Esophagus muscularis mucosa (tissue), 4 donors: ENCODE measurements at regions of chr9 and their contacts with region 1.

Region 1: GRCh38 chr9:34328987-34329832 is at the starts of genes KIF24 and NUDT2:
- DNase-seq: peak; percentile 99
- H3K4me3 ChIP-seq: peak within 1 kb of the TSS; percentile 70 to 81 (median 76)
- H3K27ac ChIP-seq: peak within 1 kb of the TSS; percentile 92 to 96 (median 94)
- H3K4me1 ChIP-seq: peaks cover 14 to 44% (median 38%) of the 10 kb centered on the region in 4 donors
- H3K27me3 ChIP-seq: no peaks in the 10 kb centered on the region
- CTCF ChIP-seq: no peak
- EP300 ChIP-seq: no peak
- POLR2A ChIP-seq: peak; percentile 20
- total RNA-seq, gene KIF24: 0.42 to 1.5 (median 0.62) TPM
- total RNA-seq, gene NUDT2: 15.0 to 45.3 (median 23.0) TPM

Region 2: GRCh38 chr9:34139477-34140146 is 189.6 kb before region 1 on chr9:
- intact Hi-C with region 1: no loop called
- DNase-seq: no peak
- H3K4me3 ChIP-seq: no peak overlapping the region
- H3K27ac ChIP-seq: no peak overlapping the region
- H3K4me1 ChIP-seq: peaks cover 0 to 9% (median 3%) of the 10 kb centered on the region in 4 donors
- H3K27me3 ChIP-seq: no peaks in the 10 kb centered on the region
- CTCF ChIP-seq: peak in 2 of 3 experiments; percentile 20 to 37
- EP300 ChIP-seq: no peak
- POLR2A ChIP-seq: no peak

Region 3: GRCh38 chr9:34271265-34272006 is 57.8 kb before region 1 on chr9:
- intact Hi-C with region 1: no loop called
- DNase-seq: no peak
- H3K4me3 ChIP-seq: no peak overlapping the region
- H3K27ac ChIP-seq: no peak overlapping the region
- H3K4me1 ChIP-seq: peaks cover 0 to 18% (median 13%) of the 10 kb centered on the region in 4 donors
- H3K27me3 ChIP-seq: no peaks in the 10 kb centered on the region
- CTCF ChIP-seq: no peak
- EP300 ChIP-seq: no peak
- POLR2A ChIP-seq: no peak

Region 4: DNA sequence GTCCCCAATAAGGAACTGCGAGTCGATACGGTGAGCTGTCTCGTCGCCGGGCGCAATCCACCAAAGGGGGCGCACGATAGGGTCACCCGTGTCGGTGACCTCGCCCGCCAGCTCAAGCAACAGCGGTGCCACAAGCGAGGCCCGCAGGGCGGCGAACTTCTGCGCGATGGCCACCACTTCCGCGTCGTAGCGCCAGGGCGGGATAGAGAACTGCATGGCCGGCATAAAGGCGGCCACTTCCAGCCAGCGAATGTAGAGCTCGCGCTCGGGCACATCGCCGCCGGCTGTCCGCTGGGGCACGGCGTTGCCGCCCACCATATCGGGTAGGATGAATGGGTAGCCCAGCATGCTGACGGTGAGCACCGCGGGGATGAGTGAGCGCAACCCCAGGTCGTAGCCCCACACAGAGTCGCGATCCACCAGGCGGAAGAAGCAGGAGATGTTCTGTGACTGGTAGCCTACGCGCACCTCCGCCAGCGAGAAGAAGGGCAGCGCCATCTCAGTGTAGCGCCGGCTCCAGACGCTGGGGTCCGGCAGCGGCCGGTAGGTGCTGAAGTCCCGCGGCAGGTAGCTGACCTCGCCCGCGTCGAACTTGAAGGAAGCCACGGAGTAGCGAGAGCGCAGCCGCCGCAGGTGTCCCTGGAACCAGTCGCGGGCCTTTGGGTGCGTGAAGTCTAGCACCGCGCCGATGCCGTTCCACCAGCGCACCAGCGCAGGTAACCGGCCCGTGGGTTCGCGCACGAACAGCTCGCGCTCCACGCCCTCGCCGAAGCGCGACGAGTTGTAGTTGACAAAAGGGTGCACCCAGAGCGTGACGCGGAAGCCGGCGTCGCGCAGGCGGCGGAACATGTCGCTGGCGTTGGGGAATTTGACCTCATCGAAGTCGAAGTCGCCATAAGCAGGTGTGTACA is 42.0 kb after region 1 on chr9:
- intact Hi-C with region 1: no loop called
- DNase-seq: no peak
- H3K4me3 ChIP-seq: peak overlapping the region in 3 of 4 donors; percentile 26 to 31 (median 28)
- H3K27ac ChIP-seq: no peak overlapping the region
- H3K4me1 ChIP-seq: peaks cover 10 to 49% (median 35%) of the 10 kb centered on the region in 4 donors
- H3K27me3 ChIP-seq: peaks cover 0 to 7% (median 0%) of the 10 kb centered on the region in 4 donors
- CTCF ChIP-seq: no peak
- EP300 ChIP-seq: no peak
- POLR2A ChIP-seq: no peak

Region 5: GRCh38 chr9:34430843-34431437 is 101.7 kb after region 1 on chr9:
- intact Hi-C with region 1: no loop called
- DNase-seq: no peak
- H3K4me3 ChIP-seq: no peak overlapping the region
- H3K27ac ChIP-seq: no peak overlapping the region
- H3K4me1 ChIP-seq: peaks cover 13 to 33% (median 23%) of the 10 kb centered on the region in 4 donors
- H3K27me3 ChIP-seq: no peaks in the 10 kb centered on the region
- CTCF ChIP-seq: no peak
- EP300 ChIP-seq: no peak
- POLR2A ChIP-seq: no peak

Region 6: DNA sequence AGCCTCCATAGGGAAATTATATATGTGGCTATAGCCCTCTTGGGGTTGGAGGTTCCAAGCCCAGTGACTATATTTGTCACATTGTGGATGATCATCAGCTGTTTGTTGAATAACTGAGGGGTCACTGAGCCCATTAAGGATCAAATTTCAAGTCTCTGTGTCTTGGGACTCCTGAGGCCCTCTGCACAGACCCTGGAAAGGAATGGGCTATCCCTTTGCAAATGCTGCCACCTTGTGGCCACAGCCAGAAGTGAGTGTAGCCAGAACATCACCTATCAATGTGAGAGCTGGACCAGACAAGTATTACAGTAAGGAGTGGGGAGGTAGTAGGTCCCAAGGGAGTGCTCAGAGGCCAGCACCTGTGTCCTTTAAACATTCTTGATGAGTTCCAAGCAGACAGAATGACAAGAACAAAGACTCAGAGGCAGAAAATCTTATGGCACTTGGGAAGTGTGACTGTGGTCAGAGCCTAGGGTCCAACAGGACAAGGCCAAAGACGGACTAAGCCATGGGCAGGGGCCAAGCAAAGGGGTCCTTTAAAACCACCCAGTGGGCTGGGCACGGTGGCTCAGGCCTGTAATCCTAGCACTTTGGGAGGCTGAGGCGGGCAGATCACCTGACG is 274.5 kb after region 1 on chr9:
- intact Hi-C with region 1: loop called (anchors 10 kb)
- DNase-seq: no peak
- H3K4me3 ChIP-seq: no peak overlapping the region
- H3K27ac ChIP-seq: no peak overlapping the region
- H3K4me1 ChIP-seq: peaks cover 0 to 7% (median 0%) of the 10 kb centered on the region in 4 donors
- H3K27me3 ChIP-seq: no peaks in the 10 kb centered on the region
- CTCF ChIP-seq: peak; percentile 88 to 97 (median 91)
- EP300 ChIP-seq: no peak
- POLR2A ChIP-seq: no peak